ENCODE measurements at regions of chr3 and their contacts with region 1.

Region 1: DNA sequence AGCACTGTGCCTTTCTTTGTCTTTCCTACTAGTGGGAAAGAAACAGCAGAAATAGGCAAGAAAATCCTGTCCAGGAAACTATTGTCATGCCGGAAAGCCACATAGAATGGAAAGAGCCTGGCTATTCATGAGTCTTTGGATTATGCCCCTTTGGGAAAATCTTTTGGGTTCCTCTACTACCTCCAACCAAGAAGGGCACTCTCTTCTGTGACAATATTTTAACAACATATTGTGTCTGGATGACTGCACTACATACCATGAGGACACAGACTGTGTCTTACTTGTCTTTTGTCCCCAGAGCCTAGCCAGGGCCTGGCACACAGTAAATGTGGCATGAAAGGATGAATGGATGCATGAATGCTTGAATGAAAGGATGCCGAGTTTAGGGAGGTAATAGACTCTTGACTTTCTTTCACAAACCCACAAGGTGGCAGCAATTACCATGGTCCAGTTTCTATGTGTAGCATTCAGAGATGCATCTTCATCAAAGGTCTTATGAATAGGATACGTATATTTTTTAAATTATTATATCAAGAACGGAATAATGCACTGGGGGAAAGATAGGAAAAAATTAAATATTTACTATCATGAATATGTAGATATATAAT is 30.3 kb downstream of the ARL14 start:
- DNase-seq: peak in 4 of 5 donors; percentile 31 to 84 (median 49)
- H3K4me3 ChIP-seq: no peak overlapping the region
- H3K27ac ChIP-seq: no peak overlapping the region
- H3K4me1 ChIP-seq: no peaks in the 10 kb centered on the region
- H3K27me3 ChIP-seq: no peaks in the 10 kb centered on the region
- CTCF ChIP-seq: peak; percentile 62

Region 2: GRCh38 chr3:160931474-160931873 is 224.2 kb after region 1 on chr3:
- intact Hi-C with region 1: loop called (anchors 10 kb)
- DNase-seq: no peak
- H3K4me3 ChIP-seq: no peak overlapping the region
- H3K27ac ChIP-seq: no peak overlapping the region
- H3K4me1 ChIP-seq: no peaks in the 10 kb centered on the region
- H3K27me3 ChIP-seq: no peaks in the 10 kb centered on the region
- CTCF ChIP-seq: no peak

Measured in kidney (tissue), 22 donors.